CD4-positive, alpha-beta memory T cell (primary cell): ENCODE measurements at regions of chr5 and their contacts with region 1.

Region 1: GRCh38 chr5:50744776-50745175 is 78.3 kb downstream of the PARP8 start:
- DNase-seq: peak; percentile 25 to 47 (median 32)
- H3K4me3 ChIP-seq: peak overlapping the region; percentile 6 to 32
- H3K4me3 Mint-ChIP-seq: peak overlapping the region; percentile 78 to 94 (median 89)
- H3K27ac ChIP-seq: peak overlapping the region; percentile 56
- H3K27ac Mint-ChIP-seq: peak overlapping the region; percentile 80 to 97 (median 94)
- H3K4me1 ChIP-seq: peaks cover 82% of the 10 kb centered on the region
- H3K4me1 Mint-ChIP-seq: peaks cover 64 to 85% (median 71%) of the 10 kb centered on the region in 4 donors
- H3K27me3 ChIP-seq: no peaks in the 10 kb centered on the region
- H3K27me3 Mint-ChIP-seq: no peaks in the 10 kb centered on the region

Region 2: DNA sequence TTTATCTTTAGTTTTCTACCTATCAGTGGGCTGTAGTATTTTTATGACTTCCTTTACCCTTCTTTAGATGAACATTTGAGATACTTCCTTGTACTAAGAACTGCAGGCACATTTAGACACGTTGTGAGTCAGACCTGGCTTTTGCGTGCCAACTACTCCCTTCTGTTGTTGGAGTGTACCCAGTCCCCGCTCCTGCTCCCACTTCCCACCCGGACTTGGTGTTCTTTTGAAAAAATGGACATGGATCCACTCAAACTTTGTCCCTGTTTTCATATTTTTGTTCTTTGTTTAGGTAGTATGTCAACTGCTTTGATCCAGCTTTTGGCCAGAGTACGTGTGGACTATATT is 17.7 kb before region 1 on chr5:
- CTCF ChIA-PET with region 1: interaction called, 5 read pairs
- POLR2A ChIA-PET with region 1: interaction called, 13 read pairs
- intact Hi-C with region 1: loop called (anchors 2 kb)
- DNase-seq: no peak
- H3K4me3 ChIP-seq: no peak overlapping the region
- H3K4me3 Mint-ChIP-seq: peak overlapping the region in 7 of 8 donors; percentile 19 to 75 (median 52)
- H3K27ac ChIP-seq: no peak overlapping the region
- H3K27ac Mint-ChIP-seq: peak overlapping the region; percentile 56 to 84 (median 75)
- H3K4me1 ChIP-seq: peaks cover 64% of the 10 kb centered on the region
- H3K4me1 Mint-ChIP-seq: peaks cover 56 to 81% (median 66%) of the 10 kb centered on the region in 4 donors
- H3K27me3 ChIP-seq: no peaks in the 10 kb centered on the region
- H3K27me3 Mint-ChIP-seq: no peaks in the 10 kb centered on the region

Region 3: GRCh38 chr5:50990296-50990924 is 245.6 kb after region 1 on chr5:
- CTCF ChIA-PET with region 1: no interaction called
- POLR2A ChIA-PET with region 1: no interaction called
- intact Hi-C with region 1: no loop called
- DNase-seq: no peak
- H3K4me3 ChIP-seq: no peak overlapping the region
- H3K4me3 Mint-ChIP-seq: no peak overlapping the region
- H3K27ac ChIP-seq: no peak overlapping the region
- H3K27ac Mint-ChIP-seq: no peak overlapping the region
- H3K4me1 ChIP-seq: no peaks in the 10 kb centered on the region
- H3K4me1 Mint-ChIP-seq: no peaks in the 10 kb centered on the region
- H3K27me3 ChIP-seq: no peaks in the 10 kb centered on the region
- H3K27me3 Mint-ChIP-seq: peaks cover 1 to 3% of the 10 kb centered on the region in 2 donors